ENCODE measurements at regions of chr10 and their contacts with region 1.

Region 1: DNA sequence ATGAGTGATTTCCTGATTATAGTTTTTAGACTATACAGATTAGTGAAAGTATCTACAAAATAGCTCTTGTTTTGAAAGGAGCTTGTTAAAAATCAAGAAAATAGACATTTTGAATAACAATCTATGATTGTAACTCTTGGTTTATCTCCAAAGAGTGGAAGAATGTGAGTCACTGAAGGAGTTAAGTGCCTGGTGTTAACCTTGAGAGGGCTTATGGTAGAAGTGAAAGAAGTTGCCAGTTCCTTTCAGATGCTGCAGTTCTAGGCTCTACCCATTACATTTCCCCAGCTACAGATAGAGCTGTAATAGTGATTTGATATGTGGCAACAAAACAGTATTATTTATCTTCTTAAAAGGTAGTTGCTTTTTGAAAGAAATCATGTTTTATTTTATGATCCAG is 12.7 kb downstream of the NRBF2 start:
- DNase-seq: peak; percentile 34
- H3K4me3 ChIP-seq: no peak overlapping the region
- H3K27ac ChIP-seq: peak overlapping the region; percentile 24
- H3K4me1 ChIP-seq: peaks cover 23% of the 10 kb centered on the region
- H3K27me3 ChIP-seq: no peaks in the 10 kb centered on the region
- CTCF ChIP-seq: no peak

Region 2: DNA sequence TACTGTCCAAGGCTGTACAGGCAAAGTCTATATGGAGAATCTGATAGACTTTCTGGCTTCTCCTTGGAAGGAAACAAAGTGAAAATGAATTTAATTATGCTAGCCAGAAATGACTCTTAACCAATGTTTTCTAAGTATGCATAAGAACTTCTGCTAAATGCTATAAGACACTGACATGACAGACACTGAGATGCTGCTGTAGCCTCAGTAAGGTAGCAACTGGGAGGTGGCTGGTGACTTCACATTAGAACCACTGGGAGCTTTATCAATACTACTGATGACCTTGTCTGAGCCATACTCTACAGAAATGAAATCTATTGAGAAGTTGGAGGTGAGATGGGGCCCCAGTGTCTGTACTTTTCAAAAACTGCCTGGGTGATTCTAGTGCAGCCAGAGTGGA is 583.0 kb before region 1 on chr10:
- CTCF ChIA-PET with region 1: no interaction called
- POLR2A ChIA-PET with region 1: interaction called, 18 read pairs
- intact Hi-C with region 1: no loop called
- DNase-seq: no peak
- H3K4me3 ChIP-seq: no peak overlapping the region
- H3K27ac ChIP-seq: no peak overlapping the region
- H3K4me1 ChIP-seq: peaks cover 15% of the 10 kb centered on the region
- H3K27me3 ChIP-seq: no peaks in the 10 kb centered on the region
- CTCF ChIP-seq: no peak

Measured in A673 (cell line).